ENCODE measurements at regions of chr7 and their contacts with region 1.

Region 1: DNA sequence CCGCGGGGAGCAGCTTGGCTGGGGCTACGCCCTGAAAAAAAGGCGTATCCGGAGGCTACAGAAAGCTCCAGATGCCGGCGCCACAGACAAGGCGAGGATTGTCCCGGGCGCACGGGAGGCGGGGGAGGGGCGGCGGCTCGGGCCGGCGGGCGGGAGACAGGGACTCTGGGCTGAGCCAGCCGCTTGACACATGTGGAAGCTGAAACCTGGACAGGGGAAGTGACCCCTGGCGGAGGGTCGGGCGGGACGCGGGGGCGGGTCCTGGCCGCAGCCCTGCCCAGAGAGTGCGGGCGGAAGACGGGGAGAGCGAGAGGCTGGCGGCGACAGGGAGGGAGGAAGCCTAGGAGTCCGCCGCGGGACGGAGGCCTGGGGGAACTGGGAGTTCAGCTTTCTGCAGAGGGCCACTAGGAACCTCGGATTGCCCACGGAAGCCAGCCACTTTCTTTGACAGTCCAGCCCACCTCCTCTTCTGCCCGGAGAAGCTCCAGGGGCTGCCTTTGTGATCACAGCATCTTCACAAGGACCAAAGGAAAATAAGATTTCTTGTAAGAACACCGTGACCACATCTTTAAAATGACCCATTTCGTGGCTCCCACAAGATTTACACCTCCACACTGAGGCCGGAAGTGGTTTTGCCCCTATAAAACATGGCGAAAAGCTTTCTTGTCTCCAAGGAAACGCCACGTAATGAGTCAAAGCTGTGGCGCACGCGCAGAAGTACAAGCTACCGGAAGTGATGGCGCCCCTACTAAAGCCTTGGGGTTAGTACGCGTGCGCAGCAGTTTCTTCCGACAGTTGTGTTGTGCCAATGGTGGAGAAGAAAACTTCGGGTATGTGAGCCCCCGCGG is at the starts of genes PLOD3 and ZNHIT1:
- DNase-seq: peak; percentile 98
- ATAC-seq: peak; percentile 94
- total RNA-seq, gene PLOD3: 39.0 TPM
- total RNA-seq, gene ZNHIT1: 58.2 TPM

Region 2: DNA sequence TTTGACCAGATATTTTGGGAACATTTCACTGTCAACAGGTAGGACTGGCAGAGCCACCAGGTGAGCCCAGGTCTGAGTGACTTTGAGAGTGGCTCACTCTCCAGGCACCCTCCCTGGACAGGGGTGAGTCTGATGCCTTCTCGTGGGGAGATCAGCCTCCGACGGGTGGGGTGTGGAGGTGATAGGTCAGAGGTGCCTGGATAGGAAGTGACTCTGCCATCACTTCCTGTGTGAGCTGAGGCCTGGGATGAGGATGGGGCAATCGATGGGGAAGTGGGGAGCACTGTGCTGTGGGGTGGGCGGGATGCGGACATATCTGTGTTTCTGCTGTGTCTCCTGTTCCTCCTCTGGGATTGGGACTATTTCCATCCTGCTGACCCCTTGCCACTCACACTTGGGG is 69.4 kb after region 1 on chr7:
- intact Hi-C with region 1: loop called (anchors 10 kb)
- DNase-seq: no peak
- ATAC-seq: no peak

Measured in Right ventricle myocardium superior (tissue), 1 donor.